Activated T-helper 1 cell treated with anti-CD3 and anti-CD28 coated beads, Interleukin-12 subunit alpha, Interleukin-12 subunit beta, Interleukin-2, Interleukin-4 antibody, amounts not matched to agents 30 ng/mL and 10 ng/mL and 1 ng/mL, durations not matched to agents 14 hours and 24 hours and 36 hours (primary cell): ENCODE measurements at regions of chr10 and their contacts with region 1.

Region 1: DNA sequence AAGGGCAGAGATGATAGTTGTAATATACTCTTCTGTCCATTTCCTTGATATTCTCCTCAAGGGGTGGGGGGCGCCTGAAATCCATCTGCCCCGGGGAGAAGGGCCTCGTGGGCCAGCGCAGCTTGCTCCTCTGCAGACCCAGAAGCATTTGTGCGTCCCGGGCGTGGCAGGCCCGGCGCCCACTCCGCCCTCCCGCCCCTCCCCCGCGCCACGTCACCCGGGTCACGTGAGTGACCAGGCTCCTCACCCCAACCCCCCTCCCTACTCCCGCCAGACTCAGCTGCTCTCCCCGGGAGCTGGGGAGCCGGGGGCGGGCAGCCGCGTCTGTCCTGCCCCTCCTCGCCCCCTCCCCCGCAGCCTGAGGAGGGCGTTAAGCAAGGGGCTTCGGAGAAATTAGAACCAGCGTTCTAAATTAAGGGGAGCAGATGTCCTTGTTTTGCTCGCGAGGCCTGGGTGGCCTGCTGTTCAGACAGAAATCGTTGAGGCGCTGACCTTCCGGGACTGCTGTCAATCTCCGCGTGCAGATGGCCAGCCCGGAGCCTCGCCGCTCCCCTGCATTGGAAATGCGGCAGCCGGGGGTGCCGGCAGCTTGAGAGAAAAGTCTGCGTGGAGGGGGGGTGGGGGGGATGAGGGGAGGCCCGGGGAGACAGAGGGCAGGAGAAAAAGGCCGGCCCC is 102.1 kb upstream of the ZNF438 start:
- DNase-seq: peak; percentile 40
- H3K4me3 Mint-ChIP-seq: peak overlapping the region; percentile 61
- H3K27ac Mint-ChIP-seq: peak overlapping the region; percentile 80
- H3K4me1 Mint-ChIP-seq: peaks cover 70% of the 10 kb centered on the region
- H3K27me3 Mint-ChIP-seq: no peaks in the 10 kb centered on the region

Region 2: GRCh38 chr10:31083765-31084184 is 50.0 kb before region 1 on chr10:
- intact Hi-C with region 1: loop called (anchors 1 kb)
- DNase-seq: peak; percentile 58
- H3K4me3 Mint-ChIP-seq: no peak overlapping the region
- H3K27ac Mint-ChIP-seq: peak overlapping the region; percentile 11
- H3K4me1 Mint-ChIP-seq: peaks cover 24% of the 10 kb centered on the region
- H3K27me3 Mint-ChIP-seq: peaks cover 4% of the 10 kb centered on the region

Region 3: GRCh38 chr10:31146491-31147209 is 12.9 kb after region 1 on chr10:
- intact Hi-C with region 1: loop called (anchors 1 kb)
- DNase-seq: no peak
- H3K4me3 Mint-ChIP-seq: no peak overlapping the region
- H3K27ac Mint-ChIP-seq: peak overlapping the region; percentile 44
- H3K4me1 Mint-ChIP-seq: peaks cover 31% of the 10 kb centered on the region
- H3K27me3 Mint-ChIP-seq: no peaks in the 10 kb centered on the region

Region 4: DNA sequence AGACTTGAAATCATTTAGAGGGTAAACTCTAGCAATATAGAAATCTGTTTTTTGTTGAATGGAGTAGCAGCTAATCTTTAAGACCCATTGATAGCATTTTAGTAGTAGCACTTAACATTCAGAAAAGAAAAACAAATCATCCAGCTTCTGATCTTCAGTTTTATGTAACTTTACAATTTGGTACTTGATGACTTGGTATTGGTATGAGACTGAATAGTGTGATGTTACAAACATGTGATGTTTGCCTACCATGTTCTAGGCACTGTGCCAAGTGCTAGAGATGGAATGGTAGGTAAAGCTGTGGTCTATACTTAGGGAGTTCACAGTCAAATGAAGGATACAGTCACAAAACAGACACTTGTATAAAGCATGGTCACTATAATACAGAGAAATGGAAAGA is 206.6 kb after region 1 on chr10:
- intact Hi-C with region 1: loop called (anchors 1 kb)
- DNase-seq: no peak
- H3K4me3 Mint-ChIP-seq: no peak overlapping the region
- H3K27ac Mint-ChIP-seq: no peak overlapping the region
- H3K4me1 Mint-ChIP-seq: no peaks in the 10 kb centered on the region
- H3K27me3 Mint-ChIP-seq: no peaks in the 10 kb centered on the region

Region 5: GRCh38 chr10:31353574-31353973 is 219.8 kb after region 1 on chr10:
- intact Hi-C with region 1: loop called (anchors 2 kb)
- DNase-seq: no peak
- H3K4me3 Mint-ChIP-seq: no peak overlapping the region
- H3K27ac Mint-ChIP-seq: peak overlapping the region; percentile 85
- H3K4me1 Mint-ChIP-seq: peaks cover 37% of the 10 kb centered on the region
- H3K27me3 Mint-ChIP-seq: no peaks in the 10 kb centered on the region

Region 6: GRCh38 chr10:31490858-31491504 is 357.2 kb after region 1 on chr10:
- intact Hi-C with region 1: loop called (anchors 5 kb)
- DNase-seq: no peak
- H3K4me3 Mint-ChIP-seq: no peak overlapping the region
- H3K27ac Mint-ChIP-seq: no peak overlapping the region
- H3K4me1 Mint-ChIP-seq: peaks cover 19% of the 10 kb centered on the region
- H3K27me3 Mint-ChIP-seq: no peaks in the 10 kb centered on the region